ENCODE measurements at regions of chr6 and their contacts with region 1.

Region 1: DNA sequence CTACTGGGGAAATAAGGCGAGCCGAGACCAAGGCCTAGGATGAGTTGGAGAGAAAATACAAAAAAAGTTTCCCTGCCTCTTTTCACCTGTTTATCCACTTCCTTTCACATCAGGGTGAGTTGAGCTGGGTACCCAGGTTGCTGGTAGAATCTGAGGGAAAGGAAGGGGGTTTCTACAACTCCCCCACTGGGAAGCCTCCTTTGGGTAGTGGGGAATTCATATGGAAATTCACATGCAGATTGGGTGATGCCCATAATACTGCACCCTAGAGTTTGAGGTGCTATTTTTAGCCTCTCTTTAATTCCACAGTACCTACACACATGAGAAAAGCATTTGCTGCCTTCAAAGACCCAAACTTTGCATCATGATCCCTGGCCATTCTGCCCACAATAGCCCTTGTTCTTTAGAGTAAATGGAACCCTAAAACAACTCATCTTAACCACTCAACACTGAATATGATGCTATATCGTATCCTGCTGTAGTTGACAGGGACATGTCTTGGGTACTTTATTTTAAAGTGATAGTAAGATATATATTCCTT is 2.7 kb downstream of the OSTM1 start:
- DNase-seq: no peak
- ATAC-seq: no peak
- H3K4me3 ChIP-seq: no peak overlapping the region
- H3K4me3 Mint-ChIP-seq: no peak overlapping the region
- H3K27ac ChIP-seq: no peak overlapping the region
- H3K27ac Mint-ChIP-seq: no peak overlapping the region
- H3K4me1 ChIP-seq: peaks cover 8 to 23% of the 10 kb centered on the region in 2 experiments
- H3K4me1 Mint-ChIP-seq: peaks cover 11 to 38% (median 20%) of the 10 kb centered on the region in 3 donors
- H3K27me3 ChIP-seq: peaks cover 0 to 3% of the 10 kb centered on the region in 2 experiments
- H3K27me3 Mint-ChIP-seq: no peaks in the 10 kb centered on the region

Region 2: DNA sequence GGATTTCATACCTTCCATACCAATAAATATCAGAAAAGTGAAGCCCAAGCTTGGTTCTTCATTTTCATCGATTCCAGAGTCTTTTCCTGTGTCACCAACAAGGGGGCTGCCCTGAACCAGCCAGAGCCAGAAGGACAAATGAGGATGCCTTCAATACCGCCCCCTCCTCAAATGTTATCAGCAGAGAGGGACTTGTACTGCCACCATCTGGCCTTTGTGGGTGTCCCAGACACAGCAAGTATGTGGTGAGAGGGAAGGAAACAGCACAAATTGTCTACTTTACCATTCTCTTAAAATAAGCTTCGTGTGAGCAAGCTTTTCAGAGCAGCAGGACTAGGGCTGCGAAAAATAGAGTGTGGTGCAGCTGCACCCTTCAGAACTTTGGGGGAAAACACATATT is 416.6 kb before region 1 on chr6:
- CTCF ChIA-PET with region 1: no interaction called
- POLR2A ChIA-PET with region 1: interaction called in 1 of 2 experiments, 10 read pairs
- DNase-seq: no peak
- ATAC-seq: no peak
- H3K4me3 ChIP-seq: no peak overlapping the region
- H3K4me3 Mint-ChIP-seq: no peak overlapping the region
- H3K27ac ChIP-seq: no peak overlapping the region
- H3K27ac Mint-ChIP-seq: no peak overlapping the region
- H3K4me1 ChIP-seq: peaks cover 8 to 23% of the 10 kb centered on the region in 2 experiments
- H3K4me1 Mint-ChIP-seq: peaks cover 32 to 37% (median 35%) of the 10 kb centered on the region in 3 donors
- H3K27me3 ChIP-seq: no peaks in the 10 kb centered on the region
- H3K27me3 Mint-ChIP-seq: no peaks in the 10 kb centered on the region

Region 3: DNA sequence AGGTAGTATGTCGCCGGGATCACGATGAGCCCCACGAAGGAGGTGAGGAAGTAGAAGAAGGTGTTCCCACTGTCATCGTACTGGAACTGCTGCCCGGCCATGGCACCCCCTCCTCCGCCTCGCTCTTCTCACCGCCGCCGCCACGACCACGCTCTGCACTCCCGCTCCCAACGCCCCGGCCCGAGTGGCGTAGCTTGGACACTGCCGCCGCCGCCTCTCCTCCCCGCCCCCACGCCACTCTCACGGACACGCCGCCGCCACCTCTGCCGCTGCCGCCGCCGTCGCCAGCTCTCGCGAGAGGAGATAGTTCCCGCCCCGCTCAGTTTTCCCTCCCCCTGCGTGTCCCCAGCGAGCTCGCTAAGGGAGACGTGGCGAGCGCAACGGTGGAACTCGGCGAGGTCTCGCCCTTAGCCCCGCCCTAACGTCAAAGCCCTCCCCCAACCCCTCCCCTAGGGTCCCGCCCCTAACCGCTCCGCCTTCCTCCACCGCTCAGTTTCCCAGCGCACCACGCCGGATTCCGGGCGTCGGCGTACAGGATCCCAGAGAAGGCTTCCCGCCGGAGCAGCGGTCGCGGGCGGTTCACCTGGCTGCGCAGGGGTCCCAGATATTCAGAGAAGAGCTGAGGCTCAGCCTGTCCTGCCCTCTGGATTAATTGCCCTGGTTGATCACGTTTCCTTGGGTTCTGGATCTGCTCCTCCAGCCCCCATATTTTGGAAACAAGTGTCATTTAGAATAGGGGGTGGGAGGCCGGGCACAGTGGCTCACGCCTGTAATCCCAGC is 113.7 kb before region 1 on chr6 and contains the start of gene SEC63:
- CTCF ChIA-PET with region 1: no interaction called
- POLR2A ChIA-PET with region 1: no interaction called
- DNase-seq: peak; percentile 93 to 98 (median 95)
- ATAC-seq: peak; percentile 97 to 99 (median 98)
- H3K4me3 ChIP-seq: peak within 1 kb of the TSS; percentile 82 to 93
- H3K4me3 Mint-ChIP-seq: peak within 1 kb of the TSS; percentile 98 to 99 (median 99)
- H3K27ac ChIP-seq: peak within 1 kb of the TSS; percentile 57
- H3K27ac Mint-ChIP-seq: peak within 1 kb of the TSS; percentile 92
- H3K4me1 ChIP-seq: peaks cover 11 to 22% of the 10 kb centered on the region in 2 experiments
- H3K4me1 Mint-ChIP-seq: peaks cover 23 to 31% (median 30%) of the 10 kb centered on the region in 3 donors
- H3K27me3 ChIP-seq: no peaks in the 10 kb centered on the region
- H3K27me3 Mint-ChIP-seq: no peaks in the 10 kb centered on the region
- total RNA-seq, gene SEC63: 56.2 to 85.5 (median 68.7) TPM

Region 4: DNA sequence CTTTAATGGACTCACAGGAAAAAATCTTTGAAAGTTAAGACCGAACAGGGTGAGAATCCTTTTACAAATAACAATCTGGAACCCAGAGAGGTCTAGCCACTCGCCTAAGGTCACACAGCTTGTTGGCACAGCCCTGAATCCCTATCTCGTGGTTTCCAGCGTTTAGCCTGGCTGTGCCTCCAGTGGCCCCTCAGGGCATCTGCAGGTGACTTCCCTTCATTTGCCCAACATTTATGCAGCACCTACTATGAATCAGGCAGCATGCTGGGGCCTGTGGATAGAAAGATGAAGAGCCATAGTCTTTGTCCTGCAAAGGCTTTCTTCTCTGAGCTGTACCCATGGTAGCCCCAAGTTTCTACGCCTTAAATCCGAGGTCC is 91.4 kb after region 1 on chr6:
- CTCF ChIA-PET with region 1: no interaction called
- POLR2A ChIA-PET with region 1: no interaction called
- DNase-seq: no peak
- ATAC-seq: no peak
- H3K4me3 ChIP-seq: no peak overlapping the region
- H3K4me3 Mint-ChIP-seq: no peak overlapping the region
- H3K27ac ChIP-seq: no peak overlapping the region
- H3K27ac Mint-ChIP-seq: no peak overlapping the region
- H3K4me1 ChIP-seq: peaks cover 6 to 39% of the 10 kb centered on the region in 2 experiments
- H3K4me1 Mint-ChIP-seq: peaks cover 31 to 40% (median 37%) of the 10 kb centered on the region in 3 donors
- H3K27me3 ChIP-seq: peaks cover 50 to 64% of the 10 kb centered on the region in 2 experiments
- H3K27me3 Mint-ChIP-seq: peaks cover 88 to 93% of the 10 kb centered on the region in 2 donors